Activated CD8-positive, alpha-beta T cell treated with anti-CD3 and anti-CD28 coated beads, Interleukin-2, amount 10 ng/mL, durations not matched to agents 7 days and 5 days (primary cell): ENCODE measurements at regions of chr12 and their contacts with region 1.

Region 1: GRCh38 chr12:30847259-30847658 is 79.3 kb upstream of the TSPAN11 start:
- DNase-seq: peak; percentile 63
- ATAC-seq: no peak
- H3K4me3 Mint-ChIP-seq: no peak overlapping the region
- H3K27ac Mint-ChIP-seq: no peak overlapping the region
- H3K4me1 Mint-ChIP-seq: peaks cover 6% of the 10 kb centered on the region
- H3K27me3 Mint-ChIP-seq: no peaks in the 10 kb centered on the region

Region 2: DNA sequence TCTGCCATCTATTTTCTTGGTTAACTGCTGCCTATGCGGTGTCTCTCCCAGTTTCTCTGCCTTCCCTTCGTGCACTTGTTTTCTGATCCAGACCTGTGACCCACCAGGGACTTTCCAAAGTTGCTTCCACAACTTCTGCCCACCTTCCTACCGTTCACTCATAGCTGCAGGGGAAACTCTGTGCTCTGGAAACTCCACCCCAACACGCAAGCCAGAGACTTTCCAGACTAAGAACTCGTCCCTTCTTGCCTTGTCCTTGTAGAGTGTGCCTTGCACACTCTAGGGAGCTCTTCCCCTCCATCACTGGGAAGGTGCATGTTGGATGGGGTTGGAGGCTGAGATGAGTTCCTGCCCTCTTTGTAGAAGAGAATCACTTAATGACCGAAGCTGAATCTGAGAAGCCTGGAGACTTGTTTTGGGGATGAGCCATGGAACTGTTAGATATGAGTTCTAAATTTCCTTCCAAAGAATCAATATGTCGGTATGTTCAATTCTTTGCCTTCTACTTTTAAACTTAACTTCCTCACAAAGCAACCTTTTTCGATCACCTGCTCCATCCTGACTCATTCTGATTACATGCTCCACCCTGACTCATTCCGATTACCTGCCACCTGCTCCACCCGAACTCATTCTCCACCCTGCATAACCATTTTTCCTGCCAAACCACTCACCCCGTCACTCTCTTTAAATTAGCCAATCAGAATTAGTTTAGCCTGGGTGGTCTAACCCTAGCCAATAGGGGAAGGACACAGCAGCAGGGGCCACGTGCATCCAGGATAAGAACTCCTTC is 10.4 kb before region 1 on chr12:
- CTCF ChIA-PET with region 1: no interaction called
- POLR2A ChIA-PET with region 1: no interaction called
- DNase-seq: no peak
- ATAC-seq: no peak
- H3K4me3 Mint-ChIP-seq: no peak overlapping the region
- H3K27ac Mint-ChIP-seq: no peak overlapping the region
- H3K4me1 Mint-ChIP-seq: no peaks in the 10 kb centered on the region
- H3K27me3 Mint-ChIP-seq: peaks cover 8% of the 10 kb centered on the region

Region 3: DNA sequence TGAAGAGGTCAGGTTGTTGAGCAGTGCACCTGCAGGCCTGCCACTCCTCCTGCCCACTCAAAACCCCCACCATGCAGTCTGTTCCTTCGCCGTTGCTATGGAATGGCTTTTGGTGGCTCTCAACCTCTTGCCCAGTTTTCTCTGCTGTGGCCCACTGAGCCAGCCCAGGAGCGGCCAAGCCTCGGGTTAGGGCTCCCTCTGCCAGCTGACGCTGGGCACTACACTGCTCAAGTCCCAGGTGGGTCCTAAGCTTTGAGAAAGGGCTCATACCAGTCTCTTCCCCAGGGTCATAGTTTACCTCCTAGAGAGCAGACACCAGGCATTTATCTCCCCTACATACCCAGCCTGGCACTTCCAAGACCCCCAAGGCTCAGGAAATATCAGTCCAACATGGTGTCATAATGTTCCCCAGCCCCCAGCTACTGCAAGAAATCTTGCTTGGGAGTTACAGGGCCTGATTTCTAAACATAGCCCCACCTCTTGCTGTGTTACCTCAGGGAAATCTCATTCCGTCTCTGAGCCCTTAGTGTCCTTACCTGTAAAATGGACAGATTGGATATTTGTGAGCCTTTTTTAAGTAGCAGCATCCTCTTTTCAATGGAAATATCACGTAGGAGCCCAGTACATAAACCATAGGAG is 138.7 kb after region 1 on chr12:
- CTCF ChIA-PET with region 1: interaction called, 36 read pairs
- POLR2A ChIA-PET with region 1: interaction called, 5 read pairs
- DNase-seq: peak; percentile 33
- ATAC-seq: peak; percentile 59
- H3K4me3 Mint-ChIP-seq: no peak overlapping the region
- H3K27ac Mint-ChIP-seq: no peak overlapping the region
- H3K4me1 Mint-ChIP-seq: peaks cover 5% of the 10 kb centered on the region
- H3K27me3 Mint-ChIP-seq: no peaks in the 10 kb centered on the region

Region 4: GRCh38 chr12:31057671-31058070 is 210.4 kb after region 1 on chr12:
- CTCF ChIA-PET with region 1: interaction called, 12 read pairs
- POLR2A ChIA-PET with region 1: no interaction called
- DNase-seq: no peak
- ATAC-seq: no peak
- H3K4me3 Mint-ChIP-seq: no peak overlapping the region
- H3K27ac Mint-ChIP-seq: no peak overlapping the region
- H3K4me1 Mint-ChIP-seq: peaks cover 8% of the 10 kb centered on the region
- H3K27me3 Mint-ChIP-seq: peaks cover 2% of the 10 kb centered on the region

Region 5: GRCh38 chr12:31238764-31239387 is 391.6 kb after region 1 on chr12:
- CTCF ChIA-PET with region 1: interaction called, 33 read pairs
- POLR2A ChIA-PET with region 1: no interaction called
- DNase-seq: peak; percentile 71
- ATAC-seq: peak; percentile 85
- H3K4me3 Mint-ChIP-seq: no peak overlapping the region
- H3K27ac Mint-ChIP-seq: no peak overlapping the region
- H3K4me1 Mint-ChIP-seq: peaks cover 5% of the 10 kb centered on the region
- H3K27me3 Mint-ChIP-seq: peaks cover 9% of the 10 kb centered on the region